Caco-2 (cell line): ENCODE measurements at regions of chr1 and their contacts with region 1.

Region 1: GRCh38 chr1:209398313-209398991 is 185.1 kb upstream of the CAMK1G start:
- DNase-seq: peak; percentile 78 to 82
- H3K4me3 ChIP-seq: no peak overlapping the region
- H3K4me3 Mint-ChIP-seq: peak overlapping the region; percentile 27
- H3K27ac Mint-ChIP-seq: peak overlapping the region; percentile 71
- H3K4me1 ChIP-seq: peaks cover 59% of the 10 kb centered on the region
- H3K4me1 Mint-ChIP-seq: peaks cover 22% of the 10 kb centered on the region
- H3K27me3 ChIP-seq: no peaks in the 10 kb centered on the region
- H3K27me3 Mint-ChIP-seq: no peaks in the 10 kb centered on the region
- CTCF ChIP-seq: no peak

Region 2: DNA sequence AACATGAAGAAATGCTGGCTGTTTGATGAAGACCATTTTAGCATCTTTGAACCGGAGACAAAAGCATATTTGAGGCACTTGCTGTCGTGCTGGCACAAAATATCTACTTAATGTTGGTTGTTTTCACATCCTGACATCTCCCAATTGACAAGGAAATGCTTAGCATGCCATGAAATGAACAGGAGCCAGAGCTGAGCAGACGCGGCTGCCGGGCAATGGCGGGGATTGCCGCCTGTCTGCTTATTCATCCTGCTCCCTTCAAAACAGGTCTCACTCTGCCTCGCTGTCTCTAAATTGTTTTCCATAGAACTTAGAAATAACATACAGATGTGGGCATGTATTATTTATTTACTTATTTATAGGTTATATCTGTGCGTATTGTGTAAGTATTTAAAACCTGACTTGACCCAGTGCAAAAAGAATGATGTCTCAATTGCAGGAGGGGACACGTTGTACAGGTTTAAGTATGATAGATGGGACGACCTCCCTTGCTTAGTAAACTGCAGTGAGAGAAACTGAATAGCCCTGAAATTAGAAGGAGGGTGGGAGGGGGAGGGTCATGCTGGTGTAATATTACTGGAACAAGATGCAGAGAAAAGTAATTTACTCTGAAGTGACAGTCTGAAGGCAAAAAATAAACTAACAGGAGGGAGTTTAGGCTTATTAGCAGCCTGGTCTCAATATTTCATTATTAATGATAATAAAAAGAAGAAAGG is 563.9 kb before region 1 on chr1:
- CTCF ChIA-PET with region 1: no interaction called
- POLR2A ChIA-PET with region 1: no interaction called
- intact Hi-C with region 1: no loop called
- DNase-seq: no peak
- H3K4me3 ChIP-seq: no peak overlapping the region
- H3K4me3 Mint-ChIP-seq: no peak overlapping the region
- H3K27ac Mint-ChIP-seq: no peak overlapping the region
- H3K4me1 ChIP-seq: no peaks in the 10 kb centered on the region
- H3K4me1 Mint-ChIP-seq: no peaks in the 10 kb centered on the region
- H3K27me3 ChIP-seq: no peaks in the 10 kb centered on the region; the same call in 1 of the 2 replicates
- H3K27me3 Mint-ChIP-seq: peaks cover 9% of the 10 kb centered on the region
- CTCF ChIP-seq: no peak

Region 3: GRCh38 chr1:209383907-209384709 is 14.3 kb before region 1 on chr1:
- CTCF ChIA-PET with region 1: no interaction called
- POLR2A ChIA-PET with region 1: interaction called, 9 read pairs
- intact Hi-C with region 1: loop called (anchors 1 kb)
- DNase-seq: peak; percentile 66
- H3K4me3 ChIP-seq: no peak overlapping the region
- H3K4me3 Mint-ChIP-seq: peak overlapping the region; percentile 39
- H3K27ac Mint-ChIP-seq: peak overlapping the region; percentile 69
- H3K4me1 ChIP-seq: peaks cover 62% of the 10 kb centered on the region
- H3K4me1 Mint-ChIP-seq: peaks cover 43% of the 10 kb centered on the region
- H3K27me3 ChIP-seq: no peaks in the 10 kb centered on the region
- H3K27me3 Mint-ChIP-seq: no peaks in the 10 kb centered on the region
- CTCF ChIP-seq: no peak

Region 4: DNA sequence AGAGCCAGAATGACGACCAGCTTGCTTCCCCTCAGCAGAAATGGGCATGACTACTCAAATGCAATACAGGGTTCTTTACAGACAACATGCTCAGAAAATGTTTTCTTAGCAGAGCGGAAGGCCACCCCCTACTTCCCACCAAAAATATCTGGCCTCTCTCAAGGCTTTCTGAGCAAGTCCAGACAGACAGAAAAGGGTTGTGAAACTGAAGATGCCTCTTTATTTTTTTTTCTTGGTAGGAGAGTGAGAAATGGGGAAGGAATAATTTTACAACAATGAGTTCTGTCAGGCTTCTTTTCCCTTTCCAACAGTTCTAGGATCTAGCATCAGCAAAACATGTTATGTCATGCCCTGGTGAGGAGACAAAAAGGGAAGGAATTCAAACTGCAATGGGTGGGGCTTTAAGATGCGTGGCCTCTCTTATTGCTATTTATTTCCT is 13.1 kb after region 1 on chr1:
- CTCF ChIA-PET with region 1: no interaction called
- POLR2A ChIA-PET with region 1: interaction called, 8 read pairs
- intact Hi-C with region 1: loop called (anchors 1 kb)
- DNase-seq: no peak
- H3K4me3 ChIP-seq: no peak overlapping the region
- H3K4me3 Mint-ChIP-seq: peak overlapping the region; percentile 21
- H3K27ac Mint-ChIP-seq: peak overlapping the region; percentile 50
- H3K4me1 ChIP-seq: peaks cover 52% of the 10 kb centered on the region
- H3K4me1 Mint-ChIP-seq: peaks cover 23% of the 10 kb centered on the region
- H3K27me3 ChIP-seq: no peaks in the 10 kb centered on the region
- H3K27me3 Mint-ChIP-seq: no peaks in the 10 kb centered on the region
- CTCF ChIP-seq: no peak

Region 5: DNA sequence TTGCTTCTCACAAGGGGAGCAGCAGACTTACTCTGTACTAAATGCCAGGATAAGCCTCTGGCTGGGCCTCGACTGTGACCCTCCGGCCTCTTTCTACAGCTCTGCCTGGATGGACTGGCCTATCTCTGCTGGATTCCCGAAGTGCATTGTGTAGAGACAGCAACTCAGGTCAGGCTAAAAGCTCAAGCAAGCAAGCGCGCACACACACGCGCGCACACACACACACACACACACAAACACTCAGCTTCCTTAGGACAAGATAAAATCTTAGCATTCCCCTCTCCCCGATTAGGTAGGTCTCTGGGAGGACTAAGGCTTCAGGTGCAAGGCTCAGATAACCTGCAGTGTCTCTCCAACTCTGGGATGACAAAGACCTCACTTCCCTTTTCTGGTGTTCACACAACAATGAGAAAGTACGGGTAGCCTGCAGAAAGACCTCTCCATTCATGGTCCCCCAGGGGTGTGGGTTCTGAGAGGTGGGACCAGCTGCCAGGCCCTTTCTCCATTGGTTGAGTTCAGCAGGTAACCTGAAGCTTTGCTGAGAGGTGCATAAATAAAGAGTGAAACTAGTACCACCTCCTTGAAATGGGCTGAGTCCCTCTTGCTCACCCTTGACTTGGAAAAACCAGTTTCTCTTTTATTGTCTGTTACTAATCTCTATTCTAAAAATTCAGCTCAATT is 29.9 kb after region 1 on chr1:
- CTCF ChIA-PET with region 1: interaction called, 4 read pairs
- POLR2A ChIA-PET with region 1: interaction called, 4 read pairs
- intact Hi-C with region 1: loop called (anchors 1 kb)
- DNase-seq: peak; percentile 50 to 76
- H3K4me3 ChIP-seq: no peak overlapping the region
- H3K4me3 Mint-ChIP-seq: peak overlapping the region; percentile 78
- H3K27ac Mint-ChIP-seq: peak overlapping the region; percentile 91
- H3K4me1 ChIP-seq: peaks cover 59% of the 10 kb centered on the region
- H3K4me1 Mint-ChIP-seq: peaks cover 58% of the 10 kb centered on the region
- H3K27me3 ChIP-seq: no peaks in the 10 kb centered on the region
- H3K27me3 Mint-ChIP-seq: no peaks in the 10 kb centered on the region
- CTCF ChIP-seq: no peak

Region 6: DNA sequence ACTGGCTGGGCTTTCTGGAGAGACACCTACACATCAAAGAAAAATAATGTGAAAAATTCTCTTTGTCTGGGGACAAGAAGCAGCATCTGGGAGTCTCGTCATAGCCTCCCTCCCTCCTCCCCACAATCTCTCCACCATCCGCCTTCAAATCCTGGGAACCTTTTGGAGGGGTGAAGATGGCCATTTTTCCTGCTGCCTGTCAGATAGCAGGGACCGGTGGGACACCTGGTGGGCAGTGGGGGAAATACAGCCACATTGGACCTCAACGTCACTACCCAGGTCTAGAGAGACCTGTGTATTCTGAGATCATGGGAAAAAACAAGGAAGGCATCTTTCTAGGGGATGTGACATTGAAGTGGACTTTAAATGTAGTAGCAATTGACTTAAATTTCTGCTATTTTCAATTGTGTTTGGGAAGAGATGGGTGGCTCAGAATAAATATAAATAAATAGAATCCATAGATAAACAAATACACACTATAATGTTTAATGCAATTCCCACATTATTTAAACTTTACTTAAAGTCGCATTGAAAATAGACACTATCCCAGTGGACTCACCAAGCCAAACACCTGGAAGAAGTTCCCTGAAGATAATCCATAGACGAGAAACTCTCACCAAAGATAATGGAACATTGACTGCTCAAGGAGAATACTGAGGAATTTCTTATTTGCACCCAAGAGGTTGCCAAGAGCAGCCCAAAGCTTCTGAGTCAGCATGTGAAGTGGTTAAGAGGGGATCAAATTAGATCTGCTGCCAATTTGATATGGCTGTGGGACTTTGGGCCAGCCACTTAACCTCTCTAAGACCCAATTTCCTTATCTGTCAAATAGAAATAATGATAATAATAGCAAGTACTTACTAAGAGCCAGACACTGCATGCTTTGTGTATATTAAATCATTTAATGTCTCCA is 37.5 kb after region 1 on chr1:
- CTCF ChIA-PET with region 1: no interaction called
- POLR2A ChIA-PET with region 1: interaction called, 4 read pairs
- intact Hi-C with region 1: loop called (anchors 1 kb)
- DNase-seq: peak; percentile 85 to 91
- H3K4me3 ChIP-seq: no peak overlapping the region
- H3K4me3 Mint-ChIP-seq: no peak overlapping the region
- H3K27ac Mint-ChIP-seq: peak overlapping the region; percentile 0
- H3K4me1 ChIP-seq: peaks cover 45% of the 10 kb centered on the region
- H3K4me1 Mint-ChIP-seq: peaks cover 19% of the 10 kb centered on the region
- H3K27me3 ChIP-seq: no peaks in the 10 kb centered on the region
- H3K27me3 Mint-ChIP-seq: no peaks in the 10 kb centered on the region
- CTCF ChIP-seq: peak; percentile 84 to 94

Region 7: DNA sequence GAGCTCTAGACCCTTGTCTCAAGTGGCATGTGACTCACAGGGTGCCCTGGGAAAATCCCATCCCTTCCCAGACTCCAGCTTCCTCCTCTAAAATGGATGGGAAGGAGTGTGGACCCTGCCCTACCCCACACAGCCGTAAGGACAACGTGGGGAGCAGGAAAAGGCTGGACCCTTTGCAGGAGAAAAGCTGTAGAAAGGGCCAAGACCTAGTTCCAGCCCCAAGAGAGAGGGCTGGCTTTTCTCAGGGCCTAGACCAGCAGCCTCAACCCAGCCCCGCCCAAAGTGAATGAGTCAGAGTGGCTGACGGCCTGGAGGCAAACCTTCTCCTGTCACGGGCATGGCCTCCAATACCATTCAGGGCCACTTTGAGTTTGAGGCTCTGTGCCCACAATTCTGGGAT is 252.7 kb after region 1 on chr1:
- CTCF ChIA-PET with region 1: no interaction called
- POLR2A ChIA-PET with region 1: no interaction called
- intact Hi-C with region 1: loop called (anchors 10 kb)
- DNase-seq: peak; percentile 68 to 75
- H3K4me3 ChIP-seq: peak overlapping the region; percentile 57
- H3K4me3 Mint-ChIP-seq: peak overlapping the region; percentile 96
- H3K27ac Mint-ChIP-seq: peak overlapping the region; percentile 88
- H3K4me1 ChIP-seq: peaks cover 70% of the 10 kb centered on the region
- H3K4me1 Mint-ChIP-seq: peaks cover 56% of the 10 kb centered on the region
- H3K27me3 ChIP-seq: no peaks in the 10 kb centered on the region
- H3K27me3 Mint-ChIP-seq: no peaks in the 10 kb centered on the region
- CTCF ChIP-seq: no peak

Region 8: DNA sequence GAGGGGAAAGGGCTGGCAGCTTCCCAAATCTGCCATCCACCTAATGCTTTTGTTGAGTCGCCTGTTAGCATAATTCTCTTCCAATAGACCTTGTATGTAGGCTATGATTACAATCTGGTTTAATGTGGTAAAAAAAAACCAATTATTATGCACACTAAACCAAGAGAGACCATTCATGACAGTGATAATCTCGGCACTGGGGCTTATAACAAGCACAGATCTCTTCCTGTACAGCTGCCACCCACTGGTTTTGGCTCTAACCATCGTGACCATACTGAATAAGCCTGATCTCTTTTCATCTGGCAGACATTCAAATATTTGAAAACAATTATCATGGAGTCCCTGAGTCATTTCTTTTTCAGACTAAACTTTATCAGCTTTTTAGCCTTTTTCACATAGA is 527.6 kb after region 1 on chr1:
- CTCF ChIA-PET with region 1: no interaction called
- POLR2A ChIA-PET with region 1: no interaction called
- intact Hi-C with region 1: no loop called
- DNase-seq: no peak
- H3K4me3 ChIP-seq: no peak overlapping the region
- H3K4me3 Mint-ChIP-seq: no peak overlapping the region
- H3K27ac Mint-ChIP-seq: no peak overlapping the region
- H3K4me1 ChIP-seq: no peaks in the 10 kb centered on the region
- H3K4me1 Mint-ChIP-seq: no peaks in the 10 kb centered on the region
- H3K27me3 ChIP-seq: no peaks in the 10 kb centered on the region
- H3K27me3 Mint-ChIP-seq: peaks cover 18% of the 10 kb centered on the region
- CTCF ChIP-seq: no peak